Transverse colon (tissue), 4 donors: ENCODE measurements at regions of chr9 and their contacts with region 1.

Region 1: DNA sequence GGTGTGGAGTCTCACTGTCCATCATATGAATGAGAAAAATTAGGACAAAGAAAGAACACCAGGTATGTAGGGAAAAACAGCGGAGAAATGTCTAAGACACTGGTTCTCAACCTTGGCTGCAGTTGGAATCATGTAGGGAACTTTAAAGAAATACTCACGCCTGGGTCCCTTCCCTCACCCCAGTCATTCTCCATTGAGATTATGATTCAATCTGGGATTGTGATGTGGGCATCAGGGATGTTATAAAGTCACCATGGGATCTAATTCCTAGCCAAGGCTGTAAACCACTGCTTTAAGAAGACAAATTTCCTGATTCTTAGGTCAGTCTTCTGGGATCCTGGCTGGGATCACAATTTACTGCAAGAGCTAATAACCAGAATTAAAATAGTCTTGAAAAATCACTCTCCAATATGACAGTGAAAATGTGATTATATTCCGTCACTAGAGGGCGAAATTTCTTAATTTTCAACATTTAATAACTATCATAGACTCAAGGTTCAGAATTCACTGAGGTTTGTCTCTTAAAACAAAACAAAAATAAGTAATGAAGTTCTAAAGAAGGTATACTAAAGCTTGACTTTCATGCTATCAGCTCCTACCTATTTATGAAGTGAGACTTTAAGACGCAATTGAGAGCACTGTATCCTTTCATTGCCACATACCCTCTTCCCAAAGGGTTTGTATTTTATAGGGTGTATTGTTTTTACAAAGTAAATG is 60.5 kb downstream of the GLDC start:
- DNase-seq: no peak
- H3K4me3 ChIP-seq: no peak overlapping the region
- H3K27ac ChIP-seq: no peak overlapping the region
- H3K4me1 ChIP-seq: no peaks in the 10 kb centered on the region
- H3K27me3 ChIP-seq: no peaks in the 10 kb centered on the region
- CTCF ChIP-seq: peak; percentile 46 to 56 (median 47)
- EP300 ChIP-seq: no peak
- POLR2A ChIP-seq: no peak

Region 2: DNA sequence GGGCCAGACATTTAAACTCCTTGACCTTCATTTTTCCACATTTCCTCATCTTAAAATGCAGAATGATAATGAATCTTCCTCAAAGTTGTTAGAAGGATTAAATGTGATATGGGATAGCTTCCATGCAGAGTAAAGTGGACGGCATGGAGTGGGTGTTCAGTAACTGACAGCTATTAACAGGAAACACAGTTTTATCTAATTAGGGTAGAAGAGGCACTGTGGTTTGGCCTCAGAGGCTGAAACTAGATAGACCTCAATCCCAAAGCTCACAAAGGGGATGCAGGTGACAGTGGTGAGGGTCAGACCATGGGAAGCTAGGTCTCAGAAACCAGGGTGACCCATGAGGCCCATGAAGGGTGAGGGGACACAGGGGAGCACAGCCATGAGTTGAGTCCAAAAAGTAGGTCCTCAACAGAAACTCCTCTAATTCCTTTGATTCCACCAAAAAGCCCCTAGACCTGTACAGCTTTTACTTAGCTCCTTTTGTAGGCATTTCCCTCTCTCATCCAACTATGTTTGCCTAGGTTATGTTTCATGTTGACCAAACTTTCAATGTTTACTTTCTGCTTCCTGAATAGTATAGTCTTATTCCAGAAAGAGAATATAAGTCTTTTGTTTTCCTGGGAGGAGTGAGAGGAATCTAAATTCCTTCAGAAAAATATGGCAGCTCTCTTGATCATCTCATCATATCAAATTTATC is 88.4 kb after region 1 on chr9:
- in situ Hi-C with region 1: loop called in 2 of 4 experiments (anchors 10 kb)
- intact Hi-C with region 1: no loop called
- DNase-seq: no peak
- H3K4me3 ChIP-seq: no peak overlapping the region
- H3K27ac ChIP-seq: no peak overlapping the region
- H3K4me1 ChIP-seq: peaks cover 0 to 6% (median 0%) of the 10 kb centered on the region in 4 donors
- H3K27me3 ChIP-seq: no peaks in the 10 kb centered on the region
- CTCF ChIP-seq: no peak
- EP300 ChIP-seq: no peak
- POLR2A ChIP-seq: no peak

Region 3: DNA sequence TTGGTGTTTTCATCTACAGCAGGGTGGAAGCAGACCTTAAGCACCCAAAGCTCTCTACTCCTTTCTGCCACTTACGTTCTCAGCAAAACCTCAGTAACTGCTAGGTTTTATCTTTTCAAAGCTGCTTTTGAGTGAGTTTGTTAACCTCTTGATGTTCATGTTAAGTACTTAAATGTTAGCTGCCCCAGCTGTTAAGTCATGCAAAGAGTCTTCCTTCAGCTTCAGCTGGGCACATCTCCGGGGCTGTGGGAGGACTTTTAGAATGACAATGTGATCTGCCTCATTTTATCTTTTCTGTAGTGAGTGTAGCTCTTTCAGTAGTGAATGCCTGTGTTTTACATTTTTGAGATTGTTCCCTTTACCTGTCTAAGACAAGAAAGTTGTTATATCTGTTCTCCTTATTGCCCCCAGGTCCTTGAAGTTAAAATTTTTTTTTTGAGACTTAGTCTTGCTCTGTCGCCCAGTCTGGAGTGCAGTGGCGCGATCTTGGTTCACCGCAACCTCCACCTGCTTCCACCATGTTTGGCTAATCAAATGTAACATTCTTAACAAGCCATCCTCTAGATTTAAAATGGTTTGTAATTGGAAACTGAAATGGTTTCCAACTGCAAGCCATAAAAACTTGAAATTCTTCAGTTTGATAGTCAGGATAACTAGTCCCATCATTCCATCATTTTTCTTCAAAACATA is 192.3 kb after region 1 on chr9:
- in situ Hi-C with region 1: no loop called
- intact Hi-C with region 1: no loop called
- DNase-seq: no peak
- H3K4me3 ChIP-seq: no peak overlapping the region
- H3K27ac ChIP-seq: no peak overlapping the region
- H3K4me1 ChIP-seq: peaks cover 10 to 34% (median 25%) of the 10 kb centered on the region in 4 donors
- H3K27me3 ChIP-seq: no peaks in the 10 kb centered on the region
- CTCF ChIP-seq: no peak
- EP300 ChIP-seq: no peak
- POLR2A ChIP-seq: no peak